GM18951 (cell line): ENCODE measurements at regions of chr2 and their contacts with region 1.

Region 1: DNA sequence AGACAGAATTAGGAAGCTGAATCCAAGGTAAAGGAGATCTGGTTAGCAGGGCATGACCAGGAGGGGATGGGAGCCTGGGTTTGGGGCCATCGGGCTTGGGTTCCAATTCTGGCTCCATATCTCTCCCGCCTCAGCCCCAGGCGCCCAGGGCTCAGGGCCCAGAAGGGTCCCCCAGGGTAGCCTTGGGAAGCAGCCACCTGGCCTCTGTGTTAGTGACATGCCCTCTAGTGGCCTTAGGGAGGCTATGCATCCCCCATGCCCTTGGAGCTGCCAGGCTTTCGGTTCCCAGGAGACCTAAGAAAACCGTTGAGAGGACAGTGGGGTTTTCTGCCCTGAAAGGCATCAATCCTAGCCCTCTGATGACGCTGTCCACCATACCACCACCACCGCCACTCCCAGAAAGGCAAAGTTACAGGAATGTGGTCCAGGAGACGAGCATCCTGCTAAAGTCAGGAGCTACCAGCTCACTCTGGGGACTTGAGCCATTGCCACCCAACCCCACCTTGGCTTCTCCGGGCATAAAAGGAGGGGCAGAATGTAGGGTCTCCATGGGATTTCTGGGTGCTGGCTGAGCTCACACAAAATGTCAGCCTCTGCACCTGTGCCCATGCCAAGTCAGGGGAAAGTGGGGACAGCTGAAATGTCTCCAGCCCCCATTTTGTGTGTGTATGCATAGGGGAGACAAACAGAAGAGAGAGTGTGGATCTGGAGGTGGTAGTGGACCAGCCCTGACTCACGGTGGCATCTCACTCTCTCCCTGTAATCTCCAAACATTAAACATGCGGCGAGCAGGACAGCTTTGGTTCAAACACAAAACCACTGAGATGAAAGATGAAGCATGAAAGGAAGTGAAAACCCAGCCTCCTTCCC is 56.5 kb downstream of the EMX1 start:
- POLR2A ChIP-seq: no peak

Region 2: DNA sequence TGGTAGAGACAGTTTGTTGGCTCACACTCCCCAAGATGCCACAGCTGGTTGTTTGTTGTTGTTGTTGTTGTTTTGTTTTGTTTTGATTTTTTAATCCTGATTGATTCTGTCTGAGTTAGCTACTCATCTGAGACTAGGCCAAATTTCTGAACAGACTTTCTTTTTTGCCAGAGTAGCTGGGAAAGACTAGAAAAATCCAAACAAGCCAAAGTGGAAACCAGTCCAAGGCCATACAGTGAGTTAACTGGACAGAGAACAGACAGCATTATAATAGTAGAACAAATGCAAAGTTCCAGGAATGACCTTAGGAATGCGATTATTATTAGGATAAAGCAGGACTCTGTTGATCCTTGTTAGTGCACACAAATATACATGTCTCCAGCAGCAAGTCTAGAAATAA is 782.4 kb before region 1 on chr2:
- in situ Hi-C with region 1: no loop called
- POLR2A ChIP-seq: no peak

Region 3: GRCh38 chr2:72892506-72893173 is 81.2 kb before region 1 on chr2:
- in situ Hi-C with region 1: loop called (anchors 10 kb)
- POLR2A ChIP-seq: no peak